ENCODE measurements at regions of chr3 and their contacts with region 1.

Region 1: DNA sequence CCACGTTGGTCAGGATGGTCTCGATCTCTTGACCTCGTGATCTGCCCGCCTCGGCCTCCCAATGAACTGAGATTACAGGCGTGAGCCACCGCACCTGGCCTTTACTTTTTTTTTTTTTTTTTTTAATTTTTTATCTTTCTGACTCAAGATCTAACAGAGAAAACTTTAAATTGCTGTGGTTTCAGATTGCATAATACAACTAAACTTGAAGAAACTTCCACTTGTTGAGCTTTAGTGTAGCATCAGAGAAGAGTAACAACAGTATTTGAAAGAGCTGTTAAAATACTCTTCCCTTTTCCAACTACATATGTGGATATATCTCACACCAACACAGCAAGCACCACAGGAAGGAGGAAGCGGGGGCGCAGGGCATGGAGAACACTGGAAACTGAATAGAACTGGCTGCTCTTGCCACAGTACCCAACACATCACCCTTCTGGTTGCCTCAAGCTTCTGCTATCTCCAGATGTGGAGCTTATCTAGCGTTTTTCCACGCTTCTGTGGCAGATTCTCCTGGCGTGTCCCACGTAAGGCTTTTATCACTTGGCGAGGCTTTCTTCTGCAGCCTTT is 45.4 kb downstream of the MAP6D1 start:
- DNase-seq: no peak
- H3K4me3 ChIP-seq: no peak overlapping the region
- H3K27ac ChIP-seq: no peak overlapping the region
- H3K4me1 ChIP-seq: no peaks in the 10 kb centered on the region
- H3K27me3 ChIP-seq: no peaks in the 10 kb centered on the region
- CTCF ChIP-seq: no peak

Region 2: GRCh38 chr3:184554470-184554869 is 774.5 kb after region 1 on chr3:
- CTCF ChIA-PET with region 1: interaction called, 14 read pairs
- POLR2A ChIA-PET with region 1: no interaction called
- intact Hi-C with region 1: no loop called
- DNase-seq: no peak
- H3K4me3 ChIP-seq: no peak overlapping the region
- H3K27ac ChIP-seq: no peak overlapping the region
- H3K4me1 ChIP-seq: no peaks in the 10 kb centered on the region
- H3K27me3 ChIP-seq: no peaks in the 10 kb centered on the region
- CTCF ChIP-seq: no peak